ENCODE measurements at regions of chr2 and their contacts with region 1.

Region 1: DNA sequence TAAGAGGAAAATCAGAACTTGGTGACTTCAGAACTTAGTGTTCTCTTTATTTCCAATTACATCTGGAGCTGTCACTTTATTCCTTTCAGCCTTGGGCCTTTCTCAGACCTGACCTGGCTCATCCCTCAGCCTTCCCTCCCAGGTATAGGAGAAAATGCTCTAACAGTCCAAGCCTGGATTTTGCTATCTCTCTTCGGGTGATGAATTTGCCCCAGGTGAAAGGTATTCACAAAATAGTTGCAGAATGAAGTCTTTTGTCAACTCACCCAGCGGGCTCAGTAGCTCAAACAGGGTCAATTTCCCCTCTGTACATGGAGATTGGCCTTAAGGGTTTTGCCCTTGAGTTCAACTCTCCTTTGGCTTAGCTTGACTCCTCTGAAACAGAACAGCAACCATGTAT is 12.0 kb downstream of the NRP2 start:
- DNase-seq: no peak
- H3K4me3 ChIP-seq: no peak overlapping the region
- H3K27ac ChIP-seq: no peak overlapping the region
- H3K4me1 ChIP-seq: no peaks in the 10 kb centered on the region
- H3K27me3 ChIP-seq: no peaks in the 10 kb centered on the region
- CTCF ChIP-seq: no peak
- POLR2A ChIP-seq: no peak

Region 2: DNA sequence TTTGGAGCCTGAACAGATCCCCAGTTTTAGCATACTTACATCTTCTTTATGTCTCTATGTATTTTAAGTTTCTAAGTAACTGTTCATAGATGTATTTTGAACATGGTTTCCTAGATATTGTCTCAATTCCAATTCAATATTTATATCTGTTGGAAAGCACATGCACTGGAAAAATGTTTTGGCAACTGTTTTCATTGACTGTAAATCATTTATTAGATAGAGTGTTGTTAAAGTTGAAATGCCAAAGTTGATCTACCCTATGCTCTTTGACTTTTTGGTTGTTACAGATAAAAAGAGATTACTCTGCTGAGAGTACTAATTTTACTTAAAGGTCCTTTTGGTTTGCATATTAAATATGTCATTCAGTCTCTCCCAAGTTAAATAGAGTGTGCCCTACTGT is 357.0 kb before region 1 on chr2:
- intact Hi-C with region 1: no loop called
- DNase-seq: no peak
- H3K4me3 ChIP-seq: no peak overlapping the region
- H3K27ac ChIP-seq: no peak overlapping the region
- H3K4me1 ChIP-seq: no peaks in the 10 kb centered on the region
- H3K27me3 ChIP-seq: no peaks in the 10 kb centered on the region
- CTCF ChIP-seq: no peak
- POLR2A ChIP-seq: no peak

Region 3: DNA sequence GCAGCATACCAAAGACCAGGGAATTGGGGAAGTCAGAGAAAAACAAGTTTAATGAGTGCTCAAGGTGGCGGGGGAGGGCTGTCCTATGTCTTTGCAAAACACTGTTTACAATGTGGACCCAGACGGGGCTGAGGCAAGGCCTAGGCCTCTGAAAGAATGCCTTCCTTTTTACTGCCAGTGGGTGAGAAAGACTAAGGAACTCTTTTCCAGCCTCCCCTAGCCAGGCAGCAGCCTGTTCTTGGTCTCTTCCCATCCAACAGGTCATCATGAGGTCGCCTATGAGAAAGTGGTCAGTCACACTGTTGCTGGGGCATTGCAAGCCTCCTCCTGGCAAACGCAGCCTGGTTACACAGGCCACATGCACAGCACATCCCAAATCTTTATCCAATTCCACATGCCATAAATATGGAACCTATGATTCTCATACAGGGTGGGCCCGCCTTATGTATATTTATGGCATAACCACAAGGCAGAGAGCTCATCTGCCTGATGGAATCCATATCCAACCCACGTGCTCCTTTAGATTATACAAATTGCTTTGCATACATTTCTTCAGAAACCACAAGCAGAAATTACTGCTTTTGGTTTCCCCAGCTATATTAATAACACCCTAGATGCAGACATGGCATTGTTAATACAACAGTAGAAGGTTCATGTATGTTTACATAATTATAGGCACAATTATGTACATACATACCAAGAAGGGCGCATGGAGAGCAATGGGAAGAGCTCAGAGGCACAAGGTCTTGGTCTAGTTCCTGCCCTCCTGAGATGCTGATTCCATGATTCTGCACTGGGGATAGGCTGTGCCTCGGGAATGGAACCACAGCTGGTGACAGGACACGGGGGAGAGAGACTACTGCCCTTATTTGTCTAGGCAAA is 36.7 kb after region 1 on chr2:
- intact Hi-C with region 1: loop called (anchors 1 kb)
- DNase-seq: no peak
- H3K4me3 ChIP-seq: no peak overlapping the region
- H3K27ac ChIP-seq: no peak overlapping the region
- H3K4me1 ChIP-seq: peaks cover 0 to 13% of the 10 kb centered on the region in 2 donors
- H3K27me3 ChIP-seq: no peaks in the 10 kb centered on the region
- CTCF ChIP-seq: no peak
- POLR2A ChIP-seq: no peak

Measured in breast epithelium (tissue), 4 donors.